Astrocyte of the cerebellum (primary cell): ENCODE measurements at regions of chr3 and their contacts with region 1.

Region 1: GRCh38 chr3:192331749-192332385 is 395.5 kb downstream of the FGF12 start:
- DNase-seq: no peak
- H3K4me3 ChIP-seq: no peak overlapping the region
- CTCF ChIP-seq: no peak

Region 2: DNA sequence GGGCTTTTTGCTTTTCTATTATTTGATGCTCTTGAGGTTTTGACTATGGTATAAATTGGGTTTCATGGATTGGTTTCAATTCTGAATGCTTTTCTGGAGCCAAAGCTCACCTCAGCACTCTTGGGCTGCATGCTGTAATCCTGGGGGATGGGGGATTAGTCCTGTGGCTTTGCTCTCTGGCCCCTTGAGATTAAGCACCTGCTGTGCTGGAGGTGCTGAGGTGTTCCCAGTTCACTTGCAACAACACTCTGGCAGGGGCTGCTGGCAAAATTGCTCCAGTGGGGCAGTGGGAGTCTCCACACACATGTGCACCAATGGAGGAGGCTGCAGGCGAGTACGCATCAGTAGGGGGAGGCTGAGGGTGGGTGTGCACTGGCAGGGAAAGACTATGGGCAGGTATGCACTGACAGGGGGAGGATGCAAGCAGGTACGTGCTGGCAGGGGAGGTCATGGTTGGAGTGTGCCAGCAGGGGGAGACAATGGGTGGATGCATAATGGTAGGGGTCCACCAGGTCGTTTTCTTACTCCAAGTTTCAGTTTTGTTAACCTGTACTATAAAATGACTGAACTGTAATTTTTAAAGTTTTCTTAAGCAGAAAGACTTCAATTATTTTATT is 93.8 kb before region 1 on chr3:
- in situ Hi-C with region 1: loop called (anchors 25 kb)
- DNase-seq: no peak
- H3K4me3 ChIP-seq: no peak overlapping the region
- CTCF ChIP-seq: no peak